Endothelial cell of umbilical vein (primary cell): ENCODE measurements at regions of chr20 and their contacts with region 1.

Region 1: GRCh38 chr20:23668477-23668951 is 20.3 kb downstream of the CST4 start:
- DNase-seq: peak; percentile 67
- H3K4me3 ChIP-seq: no peak overlapping the region
- H3K27ac ChIP-seq: no peak overlapping the region
- H3K4me1 ChIP-seq: peaks cover 7% of the 10 kb centered on the region
- H3K27me3 ChIP-seq: no peaks in the 10 kb centered on the region
- CTCF ChIP-seq: peak; percentile 81 to 82
- POLR2A ChIP-seq: no peak

Region 2: GRCh38 chr20:23606652-23607049 is 61.9 kb before region 1 on chr20:
- CTCF ChIA-PET with region 1: no interaction called
- POLR2A ChIA-PET with region 1: no interaction called
- dilution Hi-C with region 1: no loop called
- intact Hi-C with region 1: loop called (anchors 10 kb)
- DNase-seq: peak; percentile 67
- H3K4me3 ChIP-seq: no peak overlapping the region
- H3K27ac ChIP-seq: no peak overlapping the region
- H3K4me1 ChIP-seq: no peaks in the 10 kb centered on the region
- H3K27me3 ChIP-seq: peaks cover 8% of the 10 kb centered on the region in 2 experiments
- CTCF ChIP-seq: peak; percentile 86 to 90
- POLR2A ChIP-seq: no peak

Region 3: GRCh38 chr20:23721962-23722361 is 53.4 kb after region 1 on chr20:
- CTCF ChIA-PET with region 1: interaction called, 10 read pairs
- POLR2A ChIA-PET with region 1: no interaction called
- dilution Hi-C with region 1: no loop called
- intact Hi-C with region 1: loop called (anchors 1 kb)
- DNase-seq: no peak
- H3K4me3 ChIP-seq: no peak overlapping the region
- H3K27ac ChIP-seq: no peak overlapping the region
- H3K4me1 ChIP-seq: no peaks in the 10 kb centered on the region
- H3K27me3 ChIP-seq: no peaks in the 10 kb centered on the region
- CTCF ChIP-seq: no peak
- POLR2A ChIP-seq: no peak

Region 4: DNA sequence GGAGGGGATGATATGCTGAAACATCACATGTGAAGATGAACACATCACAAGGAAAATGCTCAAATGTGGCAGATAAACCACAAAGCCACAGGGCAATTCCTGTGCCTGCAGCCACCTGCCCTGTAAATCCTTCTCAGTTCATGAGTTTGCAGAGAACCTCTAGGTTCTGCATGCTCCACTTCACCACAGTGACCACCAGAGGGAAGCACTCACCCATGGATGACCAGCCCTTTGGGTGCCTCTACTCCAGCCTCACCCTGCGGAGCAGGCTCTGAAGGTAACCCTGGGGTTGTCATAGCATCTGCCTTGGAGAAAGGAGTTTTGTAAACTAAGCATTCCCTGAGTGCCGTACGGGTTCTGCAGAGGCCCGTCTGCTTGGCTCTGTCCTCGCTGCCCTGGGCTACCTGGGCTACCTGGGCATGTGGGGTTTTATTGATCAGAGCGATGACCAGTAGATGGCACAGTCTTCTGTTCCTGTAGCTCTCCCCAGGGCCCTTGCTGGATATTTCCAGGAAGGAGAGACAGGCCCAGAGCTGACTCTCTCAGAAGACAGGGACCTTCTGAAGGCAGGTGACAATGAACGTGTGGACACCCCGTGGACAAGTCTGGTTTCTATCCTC is 114.0 kb after region 1 on chr20:
- CTCF ChIA-PET with region 1: interaction called, 10 read pairs
- POLR2A ChIA-PET with region 1: no interaction called
- dilution Hi-C with region 1: no loop called
- intact Hi-C with region 1: loop called (anchors 1 kb)
- DNase-seq: peak; percentile 29
- H3K4me3 ChIP-seq: no peak overlapping the region
- H3K27ac ChIP-seq: no peak overlapping the region
- H3K4me1 ChIP-seq: no peaks in the 10 kb centered on the region
- H3K27me3 ChIP-seq: peaks cover 0 to 5% of the 10 kb centered on the region in 2 experiments
- CTCF ChIP-seq: peak; percentile 65 to 69
- POLR2A ChIP-seq: no peak

Region 5: GRCh38 chr20:23889775-23890211 is 221.3 kb after region 1 on chr20:
- CTCF ChIA-PET with region 1: interaction called, 3 read pairs
- POLR2A ChIA-PET with region 1: no interaction called
- dilution Hi-C with region 1: no loop called
- intact Hi-C with region 1: loop called (anchors 2 kb)
- DNase-seq: peak; percentile 42
- H3K4me3 ChIP-seq: no peak overlapping the region
- H3K27ac ChIP-seq: no peak overlapping the region
- H3K4me1 ChIP-seq: no peaks in the 10 kb centered on the region
- H3K27me3 ChIP-seq: no peaks in the 10 kb centered on the region
- CTCF ChIP-seq: peak; percentile 63 to 73
- POLR2A ChIP-seq: no peak

Region 6: GRCh38 chr20:23995905-23996666 is 327.6 kb after region 1 on chr20:
- CTCF ChIA-PET with region 1: interaction called, 8 read pairs
- POLR2A ChIA-PET with region 1: no interaction called
- dilution Hi-C with region 1: no loop called
- intact Hi-C with region 1: loop called (anchors 1 kb)
- DNase-seq: peak; percentile 24
- H3K4me3 ChIP-seq: no peak overlapping the region
- H3K27ac ChIP-seq: no peak overlapping the region
- H3K4me1 ChIP-seq: no peaks in the 10 kb centered on the region
- H3K27me3 ChIP-seq: peaks cover 2 to 6% of the 10 kb centered on the region in 2 experiments
- CTCF ChIP-seq: peak; percentile 55 to 59
- POLR2A ChIP-seq: no peak